HEK293T (cell line): ENCODE measurements at regions of chr12 and their contacts with region 1.

Region 1: GRCh38 chr12:52023182-52023975 is 16.6 kb downstream of the TAMALIN start:
- DNase-seq: peak; percentile 87

Region 2: GRCh38 chr12:51714666-51715065 is 308.7 kb before region 1 on chr12:
- CTCF ChIA-PET with region 1: no interaction called
- POLR2A ChIA-PET with region 1: no interaction called
- DNase-seq: no peak

Region 3: DNA sequence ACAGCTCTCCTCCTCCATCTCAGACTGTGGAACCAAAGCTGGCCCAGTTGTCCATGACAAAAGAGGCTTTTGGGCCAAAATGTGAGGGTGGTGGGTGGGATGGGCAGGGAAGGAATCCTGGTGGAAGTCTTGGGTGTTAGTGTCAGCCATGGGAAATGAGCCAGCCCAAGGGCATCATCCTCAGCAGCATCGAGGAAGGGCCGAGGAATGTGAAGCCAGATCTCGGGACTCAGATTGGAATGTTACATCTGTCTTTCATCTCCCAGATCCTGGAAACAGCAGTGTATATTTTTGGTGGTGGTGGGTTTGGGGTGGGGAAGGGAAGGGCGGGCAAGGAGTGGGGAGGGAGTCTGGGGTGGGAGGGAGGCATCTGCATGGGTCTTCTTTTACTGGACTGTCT is 28.4 kb before region 1 on chr12:
- CTCF ChIA-PET with region 1: interaction called, 40 read pairs
- POLR2A ChIA-PET with region 1: no interaction called
- DNase-seq: no peak

Region 4: GRCh38 chr12:52004042-52004648 is 19.2 kb before region 1 on chr12:
- CTCF ChIA-PET with region 1: interaction called, 99 read pairs
- POLR2A ChIA-PET with region 1: interaction called, 15 read pairs
- DNase-seq: peak; percentile 63

Region 5: GRCh38 chr12:52010152-52010622 is 13.2 kb before region 1 on chr12:
- CTCF ChIA-PET with region 1: interaction called, 99 read pairs
- POLR2A ChIA-PET with region 1: interaction called, 7 read pairs
- DNase-seq: peak; percentile 42

Region 6: DNA sequence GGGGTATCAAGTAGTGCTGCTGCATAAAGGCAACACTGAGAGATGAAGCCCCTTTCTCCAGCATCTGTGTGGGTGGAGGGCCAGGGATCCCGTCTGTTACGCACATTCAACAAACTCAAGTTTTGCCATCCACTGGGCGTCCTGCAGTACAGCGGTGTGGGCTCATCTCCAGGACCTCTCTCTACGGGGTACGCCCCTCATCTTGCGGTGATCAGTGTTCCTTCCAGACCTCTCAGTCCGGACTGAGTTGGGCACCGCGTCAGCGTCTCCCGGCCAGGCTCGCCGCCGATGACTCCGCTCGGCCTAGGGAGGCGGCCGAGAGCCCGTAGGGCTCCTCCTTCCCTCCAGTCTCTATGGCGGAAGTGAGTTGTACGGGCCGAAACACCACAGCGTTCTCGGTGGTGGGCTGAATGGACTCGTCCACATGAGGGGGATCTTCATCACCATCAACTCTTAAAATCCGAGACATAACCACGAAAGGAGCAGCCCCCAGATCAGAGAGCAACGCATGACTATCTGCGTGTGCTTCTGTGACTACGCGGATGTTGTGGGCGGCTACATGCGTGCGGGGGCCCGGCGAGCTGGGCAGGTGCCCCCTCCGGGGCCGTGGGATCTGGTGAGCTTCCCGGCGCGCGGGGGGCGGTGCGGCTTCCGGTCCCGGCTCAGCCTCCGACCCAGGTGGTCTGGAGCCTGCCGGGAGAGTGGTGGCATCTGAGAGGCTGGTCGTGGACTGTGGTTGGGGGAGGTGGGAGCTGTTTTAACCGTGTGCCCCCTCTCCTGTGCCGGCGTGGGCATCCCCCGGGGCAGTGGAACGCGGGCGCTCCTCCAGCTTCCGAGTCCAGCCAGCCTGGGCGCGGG is 46.2 kb after region 1 on chr12 and contains the start of gene ATG101:
- CTCF ChIA-PET with region 1: interaction called, 18 read pairs
- POLR2A ChIA-PET with region 1: interaction called, 23 read pairs
- DNase-seq: peak; percentile 94

Region 7: DNA sequence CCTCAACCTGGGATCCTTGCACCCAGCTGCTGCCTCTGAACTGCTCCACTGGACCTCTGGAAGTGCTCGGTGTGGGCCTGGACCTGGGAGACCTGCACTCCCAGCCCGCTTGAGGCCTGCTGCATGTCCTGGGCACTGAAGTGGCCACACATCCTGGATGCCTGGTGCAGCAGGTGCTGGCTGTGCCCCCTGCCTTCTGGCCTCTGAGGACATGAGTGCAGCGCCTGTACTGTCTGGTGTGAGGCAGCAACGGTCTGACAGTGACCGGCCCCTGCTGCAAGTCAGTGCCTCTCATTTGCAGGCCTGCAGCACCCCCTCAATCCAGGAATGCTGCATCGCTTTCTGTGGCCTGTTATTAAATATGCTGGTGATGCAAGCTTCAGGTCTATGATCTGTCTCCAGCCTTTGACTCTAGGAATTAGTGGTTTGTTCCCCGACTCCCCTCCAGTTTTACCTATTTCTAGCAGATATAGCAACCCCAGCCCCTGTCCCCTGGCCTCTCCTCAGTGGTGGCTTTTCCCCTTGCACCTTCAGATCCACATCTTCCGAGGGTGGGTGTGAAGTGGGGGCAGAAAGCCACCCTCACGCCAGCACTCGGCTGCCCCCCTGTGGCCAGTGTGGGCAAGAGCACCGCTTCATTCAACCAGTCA is 59.7 kb after region 1 on chr12:
- CTCF ChIA-PET with region 1: interaction called, 93 read pairs
- POLR2A ChIA-PET with region 1: interaction called, 6 read pairs
- DNase-seq: peak; percentile 87

Region 8: GRCh38 chr12:52121824-52122539 is 98.6 kb after region 1 on chr12:
- CTCF ChIA-PET with region 1: interaction called, 15 read pairs
- POLR2A ChIA-PET with region 1: interaction called, 3 read pairs
- DNase-seq: peak; percentile 80

Region 9: GRCh38 chr12:52147367-52147972 is 124.1 kb after region 1 on chr12:
- CTCF ChIA-PET with region 1: no interaction called
- POLR2A ChIA-PET with region 1: no interaction called
- DNase-seq: no peak